ENCODE measurements at regions of chr18 and their contacts with region 1.

Region 1: GRCh38 chr18:13940326-13940725 is 25.0 kb upstream of the MC2R start:
- DNase-seq: no peak
- ATAC-seq: no peak
- H3K4me3 ChIP-seq: no peak overlapping the region
- H3K27ac ChIP-seq: no peak overlapping the region
- H3K4me1 ChIP-seq: no peaks in the 10 kb centered on the region
- H3K27me3 ChIP-seq: no peaks in the 10 kb centered on the region
- CTCF ChIP-seq: no peak
- POLR2A ChIP-seq: no peak
- RAD21 ChIP-seq: no peak

Region 2: GRCh38 chr18:13993730-13994129 is 53.4 kb after region 1 on chr18:
- CTCF ChIA-PET with region 1: no interaction called
- POLR2A ChIA-PET with region 1: no interaction called
- dilution Hi-C with region 1: no loop called
- in situ Hi-C with region 1: loop called (anchors 10 kb)
- intact Hi-C with region 1: no loop called
- DNase-seq: no peak
- ATAC-seq: no peak
- H3K4me3 ChIP-seq: no peak overlapping the region
- H3K27ac ChIP-seq: no peak overlapping the region
- H3K4me1 ChIP-seq: no peaks in the 10 kb centered on the region
- H3K27me3 ChIP-seq: no peaks in the 10 kb centered on the region
- CTCF ChIP-seq: no peak
- POLR2A ChIP-seq: no peak
- RAD21 ChIP-seq: no peak

Measured in IMR-90 (cell line).